Activated CD8-positive, alpha-beta T cell treated with anti-CD3 and anti-CD28 coated beads, Interleukin-2, amount 10 ng/mL, durations not matched to agents 7 days and 5 days (primary cell): ENCODE measurements at regions of chr16 and their contacts with region 1.

Region 1: GRCh38 chr16:75099756-75100602 is 16.6 kb downstream of the LDHD start:
- DNase-seq: peak; percentile 72
- ATAC-seq: peak; percentile 71
- H3K4me3 Mint-ChIP-seq: peak overlapping the region; percentile 45
- H3K27ac Mint-ChIP-seq: peak overlapping the region; percentile 91
- H3K4me1 Mint-ChIP-seq: peaks cover 46% of the 10 kb centered on the region
- H3K27me3 Mint-ChIP-seq: no peaks in the 10 kb centered on the region

Region 2: DNA sequence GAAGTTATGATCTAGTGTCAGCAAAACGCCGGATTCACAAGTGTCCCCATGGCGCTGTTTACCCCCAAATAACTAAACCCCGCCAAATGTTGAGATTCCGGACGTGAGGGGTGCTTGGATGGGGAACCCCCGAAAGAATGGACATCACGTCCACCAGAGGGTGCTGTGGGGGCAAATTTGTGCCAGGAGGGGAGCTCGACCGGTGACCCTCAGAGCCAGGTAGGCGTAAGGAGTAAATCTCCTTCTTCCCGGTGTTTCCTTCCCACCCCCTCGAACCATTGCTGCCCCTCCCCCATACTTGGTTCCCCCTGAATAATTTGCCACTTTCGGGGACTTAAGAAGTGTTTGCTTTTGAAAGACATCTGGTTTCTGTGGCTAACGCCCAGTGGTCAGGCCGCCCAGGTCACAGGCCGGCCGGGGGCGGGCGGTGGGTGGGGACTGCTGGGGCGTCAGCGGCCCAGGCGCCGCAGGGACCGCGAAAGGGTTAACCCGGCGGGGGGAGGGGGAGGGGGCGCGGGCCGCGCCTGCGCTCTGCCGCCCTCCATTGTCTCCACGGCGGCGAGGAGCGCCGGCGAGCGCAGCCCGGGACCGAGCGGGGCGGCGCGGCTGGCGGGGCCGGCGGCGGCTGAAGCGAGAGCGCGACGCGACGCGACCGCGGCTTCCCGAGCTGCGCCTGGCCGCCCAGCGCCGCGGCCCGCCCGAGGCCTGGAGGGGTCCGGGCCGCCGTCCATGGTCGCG is 101.3 kb before region 1 on chr16 and contains the start of gene ZNRF1:
- CTCF ChIA-PET with region 1: interaction called, 205 read pairs
- POLR2A ChIA-PET with region 1: no interaction called
- DNase-seq: peak; percentile 89
- ATAC-seq: peak; percentile 86
- H3K4me3 Mint-ChIP-seq: peak within 1 kb of the TSS; percentile 79
- H3K27ac Mint-ChIP-seq: peak within 1 kb of the TSS; percentile 78
- H3K4me1 Mint-ChIP-seq: peaks cover 23% of the 10 kb centered on the region
- H3K27me3 Mint-ChIP-seq: peaks cover 25% of the 10 kb centered on the region
- total RNA-seq, gene ZNRF1: 8.5 to 11.1 TPM

Region 3: DNA sequence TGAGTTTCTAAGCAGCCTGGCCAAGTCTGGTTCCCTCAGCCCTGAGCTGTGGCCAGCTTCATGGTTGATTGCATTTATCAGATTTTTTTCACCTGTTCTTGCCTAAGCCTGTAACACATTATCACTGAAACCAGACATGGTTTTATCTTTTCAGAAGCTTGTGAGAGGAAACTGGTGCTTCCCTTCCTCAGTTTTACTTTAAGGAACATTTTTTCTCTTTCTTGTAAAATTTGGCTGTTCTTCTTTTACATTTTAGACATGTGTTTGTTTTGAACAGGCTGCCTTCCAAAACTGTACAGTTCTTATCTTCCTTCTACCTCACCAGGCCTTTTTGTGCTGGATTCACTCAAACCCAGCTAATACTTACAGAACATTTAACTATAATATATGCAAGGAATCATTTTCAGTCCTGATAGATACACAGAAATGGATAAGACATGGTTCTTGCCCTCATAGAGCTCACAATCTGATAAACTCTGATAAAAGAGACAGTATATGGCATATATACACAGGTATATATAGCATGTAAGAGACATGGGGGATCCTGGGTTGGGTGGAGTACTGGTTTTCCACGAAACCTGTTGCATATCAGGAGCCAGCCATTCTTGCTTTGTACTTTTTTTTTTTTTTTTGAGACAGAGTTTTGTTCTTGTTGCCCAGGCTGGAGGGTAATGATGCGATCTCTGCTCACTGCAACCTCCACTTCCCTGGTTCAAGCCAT is 56.6 kb before region 1 on chr16:
- CTCF ChIA-PET with region 1: no interaction called
- POLR2A ChIA-PET with region 1: no interaction called
- DNase-seq: no peak
- ATAC-seq: no peak
- H3K4me3 Mint-ChIP-seq: no peak overlapping the region
- H3K27ac Mint-ChIP-seq: no peak overlapping the region
- H3K4me1 Mint-ChIP-seq: peaks cover 7% of the 10 kb centered on the region
- H3K27me3 Mint-ChIP-seq: no peaks in the 10 kb centered on the region

Region 4: DNA sequence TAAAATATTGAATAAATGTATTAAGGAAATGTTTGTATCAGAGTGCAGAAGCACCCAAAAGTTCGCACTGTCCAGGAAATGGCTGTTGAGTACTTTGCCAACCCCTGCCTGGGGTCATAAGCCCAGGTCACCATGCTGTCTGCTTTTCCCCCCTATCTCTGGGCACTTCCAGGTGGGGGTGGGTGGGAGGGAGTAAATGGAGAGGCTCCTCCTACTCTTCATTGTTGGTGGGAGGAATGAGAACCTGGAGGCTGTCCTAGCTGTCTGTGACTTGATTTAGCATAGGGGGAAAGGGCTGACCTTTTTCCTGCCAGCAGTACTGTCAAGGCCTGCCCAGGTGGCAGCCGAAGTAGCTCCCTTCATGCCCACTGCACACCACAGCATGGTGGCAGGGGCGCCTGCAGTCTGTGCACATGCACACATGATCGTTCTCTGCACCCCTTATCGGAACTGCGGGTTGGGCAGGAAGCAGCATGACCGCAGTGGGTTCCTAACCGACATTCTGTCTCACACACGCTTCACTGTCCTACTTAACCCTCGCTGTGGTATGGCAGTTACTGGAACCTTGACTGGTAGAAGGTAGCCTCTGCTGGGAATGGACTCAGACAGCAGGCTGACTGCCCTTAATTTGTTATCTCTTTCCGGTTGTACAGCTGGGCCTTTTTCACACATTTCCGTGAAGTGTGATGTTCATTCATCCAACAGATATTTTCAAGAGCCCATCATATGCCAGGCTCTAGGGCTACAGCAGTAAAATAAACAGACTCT is 24.9 kb before region 1 on chr16:
- CTCF ChIA-PET with region 1: interaction called, 11 read pairs
- POLR2A ChIA-PET with region 1: interaction called, 8 read pairs
- DNase-seq: peak; percentile 92
- ATAC-seq: peak; percentile 98
- H3K4me3 Mint-ChIP-seq: peak overlapping the region; percentile 32
- H3K27ac Mint-ChIP-seq: peak overlapping the region; percentile 87
- H3K4me1 Mint-ChIP-seq: peaks cover 46% of the 10 kb centered on the region
- H3K27me3 Mint-ChIP-seq: no peaks in the 10 kb centered on the region

Region 5: DNA sequence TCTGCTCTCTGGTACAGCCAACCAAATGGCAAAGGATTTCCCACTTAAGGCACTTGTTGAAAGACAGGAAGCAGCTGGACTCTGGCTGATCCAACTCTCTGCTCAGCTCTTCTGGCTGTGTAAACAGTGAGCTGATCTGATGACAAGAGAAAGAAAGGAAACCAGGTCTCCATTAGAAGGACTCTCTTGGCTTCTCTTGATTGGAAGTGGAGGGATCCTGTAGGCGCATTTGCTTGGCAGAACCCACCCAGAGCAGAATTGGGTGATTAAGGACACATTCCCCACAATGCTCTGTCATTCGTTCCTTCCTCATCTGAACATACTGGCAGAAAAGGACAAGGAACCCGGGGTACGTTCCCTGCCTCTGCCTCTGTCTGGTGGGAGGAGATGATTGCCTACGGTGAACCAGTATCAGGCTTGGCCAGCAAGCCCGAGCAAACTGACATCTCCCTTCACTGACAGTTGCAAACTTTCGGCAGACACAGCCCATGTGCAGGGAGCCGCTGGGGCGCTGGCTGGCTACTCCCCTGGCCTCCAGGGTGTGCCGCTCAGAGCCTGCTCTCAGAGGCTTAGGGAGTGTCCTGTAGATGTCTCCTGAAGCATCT is 12.5 kb before region 1 on chr16:
- CTCF ChIA-PET with region 1: interaction called, 11 read pairs
- POLR2A ChIA-PET with region 1: no interaction called
- DNase-seq: no peak
- ATAC-seq: no peak
- H3K4me3 Mint-ChIP-seq: no peak overlapping the region
- H3K27ac Mint-ChIP-seq: no peak overlapping the region
- H3K4me1 Mint-ChIP-seq: peaks cover 18% of the 10 kb centered on the region
- H3K27me3 Mint-ChIP-seq: no peaks in the 10 kb centered on the region